ENCODE measurements at regions of chr12 and their contacts with region 1.

Region 1: GRCh38 chr12:126747530-126748149 is 1519.3 kb upstream of the TMEM132C start:
- DNase-seq: peak in 4 of 5 donors; percentile 36 to 47 (median 42)
- H3K4me3 ChIP-seq: no peak overlapping the region
- H3K4me3 Mint-ChIP-seq: no peak overlapping the region
- H3K27ac ChIP-seq: no peak overlapping the region
- H3K27ac Mint-ChIP-seq: peak overlapping the region in 2 of 7 donors; percentile 29 to 71
- H3K4me1 ChIP-seq: no peaks in the 10 kb centered on the region
- H3K4me1 Mint-ChIP-seq: peaks cover 5 to 12% (median 8%) of the 10 kb centered on the region in 4 donors
- H3K27me3 ChIP-seq: no peaks in the 10 kb centered on the region
- H3K27me3 Mint-ChIP-seq: no peaks in the 10 kb centered on the region

Region 2: GRCh38 chr12:126761420-126761819 is 13.8 kb after region 1 on chr12:
- CTCF ChIA-PET with region 1: interaction called, 43 read pairs
- POLR2A ChIA-PET with region 1: no interaction called
- intact Hi-C with region 1: no loop called
- DNase-seq: no peak
- H3K4me3 ChIP-seq: no peak overlapping the region
- H3K4me3 Mint-ChIP-seq: no peak overlapping the region
- H3K27ac ChIP-seq: no peak overlapping the region
- H3K27ac Mint-ChIP-seq: no peak overlapping the region
- H3K4me1 ChIP-seq: peaks cover 35% of the 10 kb centered on the region
- H3K4me1 Mint-ChIP-seq: peaks cover 11 to 62% (median 45%) of the 10 kb centered on the region in 4 donors
- H3K27me3 ChIP-seq: no peaks in the 10 kb centered on the region
- H3K27me3 Mint-ChIP-seq: no peaks in the 10 kb centered on the region

Region 3: GRCh38 chr12:126772171-126772864 is 24.7 kb after region 1 on chr12:
- CTCF ChIA-PET with region 1: interaction called, 19 read pairs
- POLR2A ChIA-PET with region 1: interaction called, 5 read pairs
- intact Hi-C with region 1: no loop called
- DNase-seq: peak; percentile 69 to 87 (median 78)
- H3K4me3 ChIP-seq: peak overlapping the region; percentile 1 to 61
- H3K4me3 Mint-ChIP-seq: peak overlapping the region; percentile 91 to 99 (median 96)
- H3K27ac ChIP-seq: peak overlapping the region; percentile 78
- H3K27ac Mint-ChIP-seq: peak overlapping the region; percentile 94 to 99 (median 98)
- H3K4me1 ChIP-seq: peaks cover 34% of the 10 kb centered on the region
- H3K4me1 Mint-ChIP-seq: peaks cover 16 to 46% (median 28%) of the 10 kb centered on the region in 4 donors
- H3K27me3 ChIP-seq: no peaks in the 10 kb centered on the region
- H3K27me3 Mint-ChIP-seq: no peaks in the 10 kb centered on the region

Region 4: GRCh38 chr12:126784328-126784921 is 36.8 kb after region 1 on chr12:
- CTCF ChIA-PET with region 1: interaction called, 39 read pairs
- POLR2A ChIA-PET with region 1: no interaction called
- intact Hi-C with region 1: no loop called
- DNase-seq: peak in 3 of 5 donors; percentile 17 to 45 (median 26)
- H3K4me3 ChIP-seq: no peak overlapping the region
- H3K4me3 Mint-ChIP-seq: no peak overlapping the region
- H3K27ac ChIP-seq: no peak overlapping the region
- H3K27ac Mint-ChIP-seq: peak overlapping the region in 3 of 7 donors; percentile 1 to 47 (median 38)
- H3K4me1 ChIP-seq: peaks cover 4% of the 10 kb centered on the region
- H3K4me1 Mint-ChIP-seq: peaks cover 8 to 41% (median 23%) of the 10 kb centered on the region in 4 donors
- H3K27me3 ChIP-seq: no peaks in the 10 kb centered on the region
- H3K27me3 Mint-ChIP-seq: peaks cover 0 to 1% of the 10 kb centered on the region in 2 donors

Region 5: GRCh38 chr12:126856958-126857357 is 109.3 kb after region 1 on chr12:
- CTCF ChIA-PET with region 1: no interaction called
- POLR2A ChIA-PET with region 1: interaction called, 5 read pairs
- intact Hi-C with region 1: loop called (anchors 10 kb)
- DNase-seq: no peak
- H3K4me3 ChIP-seq: no peak overlapping the region
- H3K4me3 Mint-ChIP-seq: no peak overlapping the region
- H3K27ac ChIP-seq: no peak overlapping the region
- H3K27ac Mint-ChIP-seq: no peak overlapping the region
- H3K4me1 ChIP-seq: no peaks in the 10 kb centered on the region
- H3K4me1 Mint-ChIP-seq: no peaks in the 10 kb centered on the region
- H3K27me3 ChIP-seq: no peaks in the 10 kb centered on the region
- H3K27me3 Mint-ChIP-seq: no peaks in the 10 kb centered on the region

Measured in CD4-positive, alpha-beta memory T cell (primary cell).